ENCODE measurements at regions of chr1 and their contacts with region 1.

Region 1: GRCh38 chr1:221794079-221794670 is 52.3 kb upstream of the DUSP10 start:
- DNase-seq: no peak

Region 2: DNA sequence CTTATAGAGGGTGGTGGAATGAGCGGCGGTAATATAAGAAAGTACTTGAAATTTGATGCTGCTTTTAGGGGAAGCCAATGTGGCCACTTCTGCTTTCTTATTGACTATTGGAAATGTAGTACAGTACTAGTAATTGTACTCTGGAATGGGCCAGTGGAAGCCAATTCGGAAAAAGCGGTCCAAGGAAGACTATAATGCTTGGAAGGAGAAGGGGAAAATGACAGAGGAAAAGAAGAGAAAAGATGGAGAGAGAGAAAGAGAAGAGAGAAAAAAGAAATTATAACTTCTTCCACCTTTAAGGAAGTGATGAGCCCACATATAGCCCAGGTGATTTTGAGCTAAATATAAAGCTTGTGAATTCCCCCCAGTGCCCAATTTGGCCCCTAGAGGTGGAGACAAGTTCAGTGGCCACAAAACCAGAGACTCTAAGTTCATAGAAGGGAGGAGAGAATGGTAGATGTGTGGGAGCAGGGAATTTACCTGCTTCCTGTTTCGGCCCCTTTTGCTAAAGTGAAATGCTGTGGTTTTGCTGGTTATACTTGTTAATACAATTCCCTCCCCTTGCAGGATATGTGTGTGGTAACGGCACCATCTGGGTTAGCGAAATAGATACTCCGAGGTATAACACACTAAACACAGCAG is 16.6 kb before region 1 on chr1:
- intact Hi-C with region 1: no loop called
- DNase-seq: no peak

Region 3: GRCh38 chr1:221839796-221840395 is 45.7 kb after region 1 on chr1:
- intact Hi-C with region 1: loop called (anchors 5 kb)
- DNase-seq: no peak